CD8-positive, alpha-beta memory T cell (primary cell): ENCODE measurements at regions of chr17 and their contacts with region 1.

Region 1: GRCh38 chr17:38729886-38730525 is at the start of gene CISD3:
- DNase-seq: peak; percentile 83 to 89 (median 85)
- H3K4me3 ChIP-seq: peak within 1 kb of the TSS; percentile 83
- H3K4me3 Mint-ChIP-seq: peak within 1 kb of the TSS; percentile 90 to 100 (median 97)
- H3K27ac ChIP-seq: peak within 1 kb of the TSS; percentile 64
- H3K27ac Mint-ChIP-seq: peak within 1 kb of the TSS; percentile 95 to 99 (median 98)
- H3K4me1 ChIP-seq: peaks cover 66% of the 10 kb centered on the region
- H3K4me1 Mint-ChIP-seq: peaks cover 78 to 92% (median 84%) of the 10 kb centered on the region in 3 donors
- H3K27me3 ChIP-seq: no peaks in the 10 kb centered on the region
- H3K27me3 Mint-ChIP-seq: no peaks in the 10 kb centered on the region
- total RNA-seq, gene CISD3: 58.2 to 59.6 TPM

Region 2: GRCh38 chr17:38617011-38617867 is 112.8 kb before region 1 on chr17:
- CTCF ChIA-PET with region 1: no interaction called
- POLR2A ChIA-PET with region 1: no interaction called
- DNase-seq: no peak
- H3K4me3 ChIP-seq: no peak overlapping the region
- H3K4me3 Mint-ChIP-seq: no peak overlapping the region
- H3K27ac ChIP-seq: no peak overlapping the region
- H3K27ac Mint-ChIP-seq: peak overlapping the region in 1 of 8 donors; percentile 83
- H3K4me1 ChIP-seq: no peaks in the 10 kb centered on the region
- H3K4me1 Mint-ChIP-seq: no peaks in the 10 kb centered on the region
- H3K27me3 ChIP-seq: peaks cover under 1% of the 10 kb centered on the region
- H3K27me3 Mint-ChIP-seq: peaks cover 32 to 63% of the 10 kb centered on the region in 2 donors

Region 3: GRCh38 chr17:38674749-38675615 is 55.0 kb before region 1 on chr17 and contains the start of gene EPOP:
- CTCF ChIA-PET with region 1: interaction called, 140 read pairs
- POLR2A ChIA-PET with region 1: interaction called, 5 read pairs
- DNase-seq: peak; percentile 75 to 82 (median 81)
- H3K4me3 ChIP-seq: peak within 1 kb of the TSS; percentile 5
- H3K4me3 Mint-ChIP-seq: peak within 1 kb of the TSS; percentile 49 to 83 (median 67)
- H3K27ac ChIP-seq: no peak within 1 kb of the TSS
- H3K27ac Mint-ChIP-seq: peak within 1 kb of the TSS in 2 of 8 donors; percentile 19 to 39
- H3K4me1 ChIP-seq: peaks cover 7% of the 10 kb centered on the region
- H3K4me1 Mint-ChIP-seq: peaks cover 13 to 21% (median 16%) of the 10 kb centered on the region in 3 donors
- H3K27me3 ChIP-seq: peaks cover 14% of the 10 kb centered on the region
- H3K27me3 Mint-ChIP-seq: peaks cover 25 to 43% of the 10 kb centered on the region in 2 donors
- total RNA-seq, gene EPOP: 47.0 to 50.0 TPM

Region 4: DNA sequence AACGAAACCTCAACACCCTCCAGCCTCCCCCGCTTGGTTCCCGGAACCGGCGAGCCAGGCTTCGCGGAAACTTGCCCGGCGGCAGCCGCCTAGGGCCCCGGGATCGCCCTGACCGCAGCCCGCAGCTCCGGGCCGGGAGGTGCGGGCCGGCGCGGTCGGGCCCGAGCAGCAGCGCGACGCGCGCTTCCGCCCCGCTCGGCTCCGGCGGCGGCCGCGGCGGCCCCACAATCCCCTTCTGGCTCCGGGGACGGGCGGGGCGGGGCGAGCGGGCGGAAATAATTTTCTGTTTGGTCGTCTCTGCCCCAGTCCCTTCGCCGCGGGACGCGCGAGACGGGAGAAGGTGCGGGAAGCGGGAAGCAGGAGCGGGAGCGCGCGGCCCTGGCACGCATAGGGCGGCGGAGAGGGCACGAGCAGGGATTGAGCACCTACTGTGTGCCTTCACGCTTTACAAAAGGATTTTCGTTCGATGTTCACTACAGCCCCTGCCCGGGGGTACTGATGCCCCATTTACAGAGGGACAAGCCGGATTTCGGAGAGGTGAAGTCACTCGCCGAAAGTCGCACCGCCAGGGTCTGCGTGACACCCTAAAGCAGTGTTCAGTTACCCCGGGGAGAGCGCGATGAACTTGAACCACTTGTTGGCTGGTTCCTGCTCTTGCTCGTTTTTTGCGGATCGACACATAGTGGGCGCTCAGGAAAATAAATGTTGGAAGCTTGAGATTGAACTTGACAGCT is 27.7 kb before region 1 on chr17:
- CTCF ChIA-PET with region 1: interaction called, 26 read pairs
- POLR2A ChIA-PET with region 1: interaction called, 56 read pairs
- DNase-seq: peak; percentile 76 to 86 (median 77)
- H3K4me3 ChIP-seq: peak overlapping the region; percentile 93
- H3K4me3 Mint-ChIP-seq: peak overlapping the region; percentile 92 to 99 (median 94)
- H3K27ac ChIP-seq: peak overlapping the region; percentile 90
- H3K27ac Mint-ChIP-seq: peak overlapping the region; percentile 93 to 100 (median 98)
- H3K4me1 ChIP-seq: peaks cover 32% of the 10 kb centered on the region
- H3K4me1 Mint-ChIP-seq: peaks cover 30 to 44% (median 40%) of the 10 kb centered on the region in 3 donors
- H3K27me3 ChIP-seq: no peaks in the 10 kb centered on the region
- H3K27me3 Mint-ChIP-seq: no peaks in the 10 kb centered on the region

Region 5: GRCh38 chr17:38752119-38752929 is 22.3 kb after region 1 on chr17 and contains the start of gene PSMB3:
- CTCF ChIA-PET with region 1: interaction called, 23 read pairs
- POLR2A ChIA-PET with region 1: interaction called, 10 read pairs
- DNase-seq: peak; percentile 91 to 97 (median 96)
- H3K4me3 ChIP-seq: peak within 1 kb of the TSS; percentile 98
- H3K4me3 Mint-ChIP-seq: peak within 1 kb of the TSS; percentile 88 to 100 (median 98)
- H3K27ac ChIP-seq: peak within 1 kb of the TSS; percentile 91
- H3K27ac Mint-ChIP-seq: peak within 1 kb of the TSS; percentile 89 to 99 (median 97)
- H3K4me1 ChIP-seq: peaks cover 55% of the 10 kb centered on the region
- H3K4me1 Mint-ChIP-seq: peaks cover 46 to 72% (median 52%) of the 10 kb centered on the region in 3 donors
- H3K27me3 ChIP-seq: peaks cover 29% of the 10 kb centered on the region
- H3K27me3 Mint-ChIP-seq: peaks cover 24 to 29% of the 10 kb centered on the region in 2 donors
- total RNA-seq, gene PSMB3: 317 to 323 TPM